HEK293 (cell line): ENCODE measurements at regions of chr17 and their contacts with region 1.

Region 1: DNA sequence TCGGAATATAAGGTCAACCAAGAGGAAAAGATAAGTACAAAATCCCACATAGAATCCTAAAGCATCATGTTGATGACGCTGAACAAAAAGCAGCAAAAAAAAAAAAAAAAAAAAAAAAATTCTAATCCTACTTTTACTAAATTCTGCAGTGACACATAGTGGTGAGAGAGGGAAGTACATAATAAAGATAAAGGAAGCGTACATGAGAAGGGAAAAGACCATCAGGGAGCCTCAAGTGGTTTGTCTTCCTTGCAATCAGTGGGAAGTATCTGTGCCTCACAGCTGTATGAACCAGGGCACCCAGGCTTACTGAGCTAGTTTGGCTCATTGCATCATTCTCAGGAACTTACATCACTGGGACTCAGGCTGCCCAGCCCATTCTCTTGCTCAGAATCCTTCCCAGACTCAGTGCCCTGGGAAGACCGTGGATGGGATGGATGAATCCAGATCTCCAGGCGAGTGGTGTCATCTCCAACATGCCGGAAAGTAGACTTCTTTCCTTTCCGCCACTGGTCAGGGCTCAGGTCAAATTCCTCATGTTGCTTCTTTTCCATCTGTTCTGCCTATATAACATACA is 21.2 kb downstream of the SMG6 start:
- H3K4me3 ChIP-seq: no peak overlapping the region
- H3K27ac ChIP-seq: no peak overlapping the region
- H3K4me1 ChIP-seq: no peaks in the 10 kb centered on the region
- CTCF ChIP-seq: peak; percentile 40; the same call in 1 of the 2 replicates

Region 2: GRCh38 chr17:2259769-2260536 is 22.4 kb before region 1 on chr17:
- CTCF ChIA-PET with region 1: interaction called, 11 read pairs
- POLR2A ChIA-PET with region 1: interaction called, 4 read pairs
- H3K4me3 ChIP-seq: no peak overlapping the region
- H3K27ac ChIP-seq: no peak overlapping the region
- H3K4me1 ChIP-seq: peaks cover 14% of the 10 kb centered on the region
- CTCF ChIP-seq: no peak

Region 3: GRCh38 chr17:2427215-2427614 is 144.8 kb after region 1 on chr17:
- CTCF ChIA-PET with region 1: no interaction called
- POLR2A ChIA-PET with region 1: no interaction called
- H3K4me3 ChIP-seq: no peak overlapping the region
- H3K27ac ChIP-seq: no peak overlapping the region
- H3K4me1 ChIP-seq: no peaks in the 10 kb centered on the region
- CTCF ChIP-seq: no peak